Activated B cell treated with CpG ODN at 0.5 μM for 24 hours (primary cell): ENCODE measurements at regions of chr3 and their contacts with region 1.

Region 1: DNA sequence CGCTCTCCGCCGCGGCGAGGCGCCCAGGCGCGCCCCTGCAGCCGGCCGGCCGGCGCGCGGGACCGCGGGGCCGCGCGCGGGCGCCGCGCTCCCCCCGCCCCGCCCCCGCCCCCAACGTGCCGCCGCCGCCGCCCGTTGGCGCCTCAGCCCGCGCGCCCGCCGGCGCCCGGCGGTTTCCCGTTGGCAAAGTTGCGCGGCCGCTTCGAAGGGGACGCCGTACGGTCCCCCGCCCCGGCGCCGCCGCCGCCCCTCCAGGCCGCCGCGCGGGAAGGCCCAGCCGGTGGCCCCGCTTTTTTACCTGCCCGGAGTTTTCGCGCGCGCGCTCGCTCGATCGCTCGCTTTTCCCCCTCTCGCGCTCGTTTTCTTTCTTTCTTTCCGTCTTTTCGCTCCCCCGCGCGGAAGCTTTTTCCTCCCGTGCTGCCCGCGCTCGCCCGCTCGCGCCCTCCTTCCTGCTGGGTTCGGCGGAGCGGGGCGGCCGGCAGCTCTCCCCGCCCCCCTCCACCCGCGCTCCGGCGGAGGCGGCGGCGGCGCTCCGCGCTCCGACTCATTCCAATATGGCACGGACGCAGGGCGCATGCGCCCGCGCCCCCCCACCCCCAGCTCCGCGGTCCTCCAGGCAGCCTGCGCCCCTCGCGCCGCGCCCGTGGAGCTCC is at the start of gene SFMBT1:
- DNase-seq: peak; percentile 74
- ATAC-seq: peak; percentile 57
- H3K4me3 Mint-ChIP-seq: peak within 1 kb of the TSS; percentile 95
- H3K27ac Mint-ChIP-seq: peak within 1 kb of the TSS; percentile 97
- H3K4me1 Mint-ChIP-seq: peaks cover 31% of the 10 kb centered on the region
- H3K27me3 Mint-ChIP-seq: no peaks in the 10 kb centered on the region
- CTCF ChIP-seq: no peak
- total RNA-seq, gene SFMBT1: 24.6 and 31.6 TPM in 2 replicates

Region 2: DNA sequence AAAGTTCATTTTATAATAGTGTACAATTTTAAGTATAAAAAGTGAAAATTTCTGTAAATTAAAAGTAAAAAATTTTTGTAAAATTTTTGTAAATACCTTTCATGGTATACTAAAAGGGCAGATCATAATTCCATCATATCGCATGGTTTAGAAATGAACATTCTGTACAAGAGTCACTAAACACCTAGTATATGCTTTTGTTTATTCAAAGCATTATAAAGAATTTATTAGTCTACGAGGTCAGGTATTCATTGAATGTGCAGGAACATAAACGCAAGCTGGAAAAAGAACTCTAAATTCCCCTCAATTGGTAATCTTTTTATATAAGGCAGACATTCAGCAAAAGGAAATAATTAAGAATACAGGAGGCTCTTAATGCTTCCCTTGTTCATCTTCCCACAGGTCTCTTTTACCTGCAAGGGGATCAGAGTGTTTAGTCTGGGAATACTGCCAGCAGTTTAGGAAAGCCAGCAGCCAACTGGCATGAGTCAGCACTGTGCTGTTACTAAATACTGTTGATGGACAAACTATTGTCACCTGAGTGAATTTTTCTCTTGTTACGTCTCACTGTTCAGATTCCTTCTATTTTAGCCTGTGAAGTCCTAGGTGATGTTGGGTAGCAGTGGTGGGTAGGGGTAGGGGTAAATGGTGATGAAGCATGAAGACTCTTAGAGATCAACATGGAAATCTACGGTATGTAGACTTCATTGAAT is 439.1 kb before region 1 on chr3:
- CTCF ChIA-PET with region 1: no interaction called
- POLR2A ChIA-PET with region 1: no interaction called
- intact Hi-C with region 1: no loop called
- DNase-seq: no peak
- ATAC-seq: no peak
- H3K4me3 Mint-ChIP-seq: no peak overlapping the region
- H3K27ac Mint-ChIP-seq: no peak overlapping the region
- H3K4me1 Mint-ChIP-seq: no peaks in the 10 kb centered on the region
- H3K27me3 Mint-ChIP-seq: no peaks in the 10 kb centered on the region
- CTCF ChIP-seq: no peak

Region 3: GRCh38 chr3:52685709-52686691 is 359.6 kb before region 1 on chr3 and contains the starts of genes GNL3 and PBRM1:
- CTCF ChIA-PET with region 1: no interaction called
- POLR2A ChIA-PET with region 1: interaction called, 4 read pairs
- intact Hi-C with region 1: loop called (anchors 1 kb)
- DNase-seq: peak; percentile 92
- ATAC-seq: peak; percentile 89
- H3K4me3 Mint-ChIP-seq: peak within 1 kb of the TSS; percentile 96
- H3K27ac Mint-ChIP-seq: peak within 1 kb of the TSS; percentile 95
- H3K4me1 Mint-ChIP-seq: peaks cover 53% of the 10 kb centered on the region
- H3K27me3 Mint-ChIP-seq: no peaks in the 10 kb centered on the region
- CTCF ChIP-seq: no peak
- total RNA-seq, gene GNL3: 137 and 145 TPM in 2 replicates
- total RNA-seq, gene PBRM1: 60.0 and 62.1 TPM in 2 replicates

Region 4: GRCh38 chr3:52779011-52779836 is 266.4 kb before region 1 on chr3:
- CTCF ChIA-PET with region 1: no interaction called
- POLR2A ChIA-PET with region 1: no interaction called
- intact Hi-C with region 1: loop called (anchors 2 kb)
- DNase-seq: peak; percentile 59
- ATAC-seq: peak; percentile 91
- H3K4me3 Mint-ChIP-seq: peak overlapping the region; percentile 36
- H3K27ac Mint-ChIP-seq: peak overlapping the region; percentile 95
- H3K4me1 Mint-ChIP-seq: peaks cover 14% of the 10 kb centered on the region
- H3K27me3 Mint-ChIP-seq: no peaks in the 10 kb centered on the region
- CTCF ChIP-seq: no peak

Region 5: GRCh38 chr3:52959773-52960172 is 85.9 kb before region 1 on chr3:
- CTCF ChIA-PET with region 1: interaction called, 3 read pairs
- POLR2A ChIA-PET with region 1: interaction called, 3 read pairs
- intact Hi-C with region 1: loop called (anchors 5 kb)
- DNase-seq: no peak
- ATAC-seq: no peak
- H3K4me3 Mint-ChIP-seq: no peak overlapping the region
- H3K27ac Mint-ChIP-seq: no peak overlapping the region
- H3K4me1 Mint-ChIP-seq: peaks cover 50% of the 10 kb centered on the region
- H3K27me3 Mint-ChIP-seq: no peaks in the 10 kb centered on the region
- CTCF ChIP-seq: no peak

Region 6: DNA sequence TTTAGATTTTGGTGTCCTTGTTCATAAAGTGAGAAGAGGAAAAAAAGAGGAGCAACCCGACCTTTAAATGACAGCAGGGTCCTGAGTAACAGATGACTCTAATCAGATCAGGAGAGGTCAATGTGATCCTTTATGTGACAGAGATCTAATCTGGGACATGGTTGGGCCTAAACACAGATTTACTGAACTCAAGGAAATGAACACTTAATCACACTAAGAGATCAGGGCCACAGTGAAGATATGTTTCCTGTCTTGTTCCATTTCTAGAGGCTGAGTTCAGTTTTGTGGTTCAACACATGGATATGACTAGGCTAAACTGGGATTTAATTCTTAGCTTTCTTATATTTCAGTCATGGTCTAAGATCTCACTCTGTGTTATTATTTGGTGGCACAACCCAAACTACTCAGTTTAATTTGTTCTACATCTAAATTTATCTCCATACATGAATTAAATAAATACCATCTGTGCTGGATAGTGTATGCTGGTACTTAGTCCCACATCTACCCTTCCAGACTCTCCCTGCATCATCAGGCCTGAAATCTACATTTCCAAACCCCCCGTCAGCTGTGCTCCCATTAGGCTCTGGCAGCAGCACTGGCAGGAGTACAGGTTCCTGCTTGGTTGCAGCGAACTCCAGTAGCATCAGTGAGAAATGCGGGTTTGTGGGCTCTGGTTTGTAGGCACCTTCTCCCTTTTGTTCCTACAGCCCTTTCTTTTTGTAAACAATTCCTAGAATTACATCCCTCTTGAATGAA is 22.4 kb before region 1 on chr3:
- CTCF ChIA-PET with region 1: interaction called, 3 read pairs
- POLR2A ChIA-PET with region 1: interaction called, 11 read pairs
- intact Hi-C with region 1: loop called (anchors 1 kb)
- DNase-seq: no peak
- ATAC-seq: no peak
- H3K4me3 Mint-ChIP-seq: no peak overlapping the region
- H3K27ac Mint-ChIP-seq: no peak overlapping the region
- H3K4me1 Mint-ChIP-seq: peaks cover 52% of the 10 kb centered on the region
- H3K27me3 Mint-ChIP-seq: no peaks in the 10 kb centered on the region
- CTCF ChIP-seq: no peak

Region 7: GRCh38 chr3:53130179-53131061 is 84.8 kb after region 1 on chr3 and contains the start of gene RFT1:
- CTCF ChIA-PET with region 1: no interaction called
- POLR2A ChIA-PET with region 1: no interaction called
- intact Hi-C with region 1: loop called (anchors 1 kb)
- DNase-seq: peak; percentile 95
- ATAC-seq: peak; percentile 89
- H3K4me3 Mint-ChIP-seq: peak within 1 kb of the TSS; percentile 89
- H3K27ac Mint-ChIP-seq: peak within 1 kb of the TSS; percentile 97
- H3K4me1 Mint-ChIP-seq: peaks cover 27% of the 10 kb centered on the region
- H3K27me3 Mint-ChIP-seq: no peaks in the 10 kb centered on the region
- CTCF ChIP-seq: no peak
- total RNA-seq, gene RFT1: 23.6 TPM in 2 replicates